CD8-positive, alpha-beta T cell (primary cell): ENCODE measurements at regions of chr10 and their contacts with region 1.

Region 1: DNA sequence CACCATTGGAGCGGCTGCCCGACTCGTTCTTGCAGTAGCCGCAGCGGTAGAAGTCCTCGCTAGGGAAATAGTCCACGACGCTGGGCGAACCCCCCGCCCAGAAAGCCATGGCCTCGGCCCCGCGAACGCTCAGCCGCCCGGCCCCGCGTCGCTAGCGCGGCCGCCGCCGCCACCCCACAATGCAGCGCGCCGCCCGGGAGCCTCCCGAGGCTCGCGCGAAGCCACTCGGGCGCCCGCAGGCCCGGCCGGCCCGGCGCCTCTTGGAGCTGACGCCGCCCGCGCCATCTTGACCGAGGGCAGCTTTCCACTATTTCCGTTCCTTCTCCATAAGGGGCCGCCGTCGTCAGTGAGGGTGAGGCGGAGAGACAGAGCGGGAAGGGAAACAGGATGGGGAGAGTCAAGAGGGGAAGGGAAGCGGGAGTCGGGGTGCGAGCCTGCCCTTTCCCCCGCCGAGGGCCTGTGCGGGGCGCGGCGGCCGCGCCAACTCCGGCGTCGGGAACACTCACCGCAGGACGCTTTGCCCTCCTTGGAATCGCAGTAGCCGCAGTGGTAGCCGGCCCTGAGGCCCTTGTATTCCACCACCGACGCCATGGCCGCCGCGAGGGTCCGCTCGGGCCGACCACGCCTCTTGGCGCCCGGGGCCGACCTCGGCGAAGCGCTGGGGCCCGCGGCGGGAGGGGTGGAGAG is at the start of gene ATE1:
- DNase-seq: peak; percentile 68 to 91 (median 81)
- ATAC-seq: peak; percentile 90
- H3K4me3 ChIP-seq: peak within 1 kb of the TSS; percentile 72 to 87
- H3K4me3 Mint-ChIP-seq: peak within 1 kb of the TSS; percentile 91
- H3K27ac ChIP-seq: peak within 1 kb of the TSS; percentile 91 to 94
- H3K27ac Mint-ChIP-seq: peak within 1 kb of the TSS; percentile 97
- H3K4me1 ChIP-seq: peaks cover 14% of the 10 kb centered on the region
- H3K4me1 Mint-ChIP-seq: peaks cover 30% of the 10 kb centered on the region
- H3K27me3 ChIP-seq: no peaks in the 10 kb centered on the region
- H3K27me3 Mint-ChIP-seq: no peaks in the 10 kb centered on the region
- CTCF ChIP-seq: no peak
- total RNA-seq, gene ATE1: 11.6 to 14.6 TPM

Region 2: GRCh38 chr10:121910673-121911420 is 17.1 kb before region 1 on chr10:
- CTCF ChIA-PET with region 1: no interaction called
- POLR2A ChIA-PET with region 1: no interaction called
- intact Hi-C with region 1: no loop called
- DNase-seq: no peak
- ATAC-seq: no peak
- H3K4me3 ChIP-seq: no peak overlapping the region
- H3K4me3 Mint-ChIP-seq: no peak overlapping the region
- H3K27ac ChIP-seq: no peak overlapping the region
- H3K27ac Mint-ChIP-seq: no peak overlapping the region
- H3K4me1 ChIP-seq: no peaks in the 10 kb centered on the region
- H3K4me1 Mint-ChIP-seq: peaks cover 4% of the 10 kb centered on the region
- H3K27me3 ChIP-seq: no peaks in the 10 kb centered on the region
- H3K27me3 Mint-ChIP-seq: no peaks in the 10 kb centered on the region
- CTCF ChIP-seq: no peak

Region 3: GRCh38 chr10:121942749-121943416 is 14.9 kb after region 1 on chr10:
- CTCF ChIA-PET with region 1: no interaction called
- POLR2A ChIA-PET with region 1: no interaction called
- intact Hi-C with region 1: no loop called
- DNase-seq: no peak
- ATAC-seq: no peak
- H3K4me3 ChIP-seq: no peak overlapping the region
- H3K4me3 Mint-ChIP-seq: no peak overlapping the region
- H3K27ac ChIP-seq: no peak overlapping the region
- H3K27ac Mint-ChIP-seq: no peak overlapping the region
- H3K4me1 ChIP-seq: no peaks in the 10 kb centered on the region
- H3K4me1 Mint-ChIP-seq: no peaks in the 10 kb centered on the region
- H3K27me3 ChIP-seq: no peaks in the 10 kb centered on the region
- H3K27me3 Mint-ChIP-seq: peaks cover 14% of the 10 kb centered on the region
- CTCF ChIP-seq: no peak

Region 4: DNA sequence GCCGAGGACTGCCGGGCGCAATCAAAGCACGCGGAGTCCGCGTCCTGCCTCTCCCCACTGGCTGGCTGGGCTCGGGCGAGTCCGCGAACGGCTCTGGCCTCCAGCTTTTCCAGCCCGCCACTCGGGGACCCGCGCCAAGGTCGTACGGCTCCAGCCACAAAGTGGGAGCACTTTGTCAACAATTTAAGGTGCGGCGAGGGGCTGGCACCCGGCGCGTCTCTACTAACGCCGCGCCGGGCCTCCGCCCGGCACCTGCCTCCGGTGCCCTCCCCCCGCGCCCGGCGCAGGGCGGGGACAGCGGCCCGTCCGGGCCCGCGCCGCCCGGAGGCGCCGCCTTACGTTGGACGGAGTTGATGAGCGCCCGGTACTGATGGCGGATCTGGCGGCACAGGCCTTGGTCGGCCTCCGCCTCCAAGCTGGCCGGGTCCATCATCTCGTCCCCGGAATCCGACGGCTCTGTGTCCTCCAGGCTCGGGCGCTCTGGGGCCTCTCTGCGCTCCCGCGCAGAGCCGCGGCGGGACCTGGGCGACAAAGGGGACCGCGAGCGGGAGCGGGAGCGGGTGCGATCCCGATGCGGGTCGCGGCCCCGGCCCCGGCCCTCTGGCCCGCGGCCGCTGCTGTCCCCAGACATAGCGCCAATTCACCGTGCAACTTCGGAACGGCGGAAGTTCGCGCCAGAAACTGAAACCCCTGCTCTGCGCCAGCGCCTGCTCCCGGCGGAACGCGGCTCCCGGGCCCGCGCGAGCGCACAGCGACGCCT is 46.7 kb after region 1 on chr10 and contains the start of gene NSMCE4A:
- CTCF ChIA-PET with region 1: no interaction called
- POLR2A ChIA-PET with region 1: interaction called, 3 read pairs
- intact Hi-C with region 1: loop called (anchors 1 kb)
- DNase-seq: peak; percentile 43 to 84 (median 69)
- ATAC-seq: peak; percentile 84
- H3K4me3 ChIP-seq: peak within 1 kb of the TSS; percentile 64 to 86
- H3K4me3 Mint-ChIP-seq: peak within 1 kb of the TSS; percentile 81
- H3K27ac ChIP-seq: peak within 1 kb of the TSS; percentile 62 to 76
- H3K27ac Mint-ChIP-seq: peak within 1 kb of the TSS; percentile 37
- H3K4me1 ChIP-seq: peaks cover 18% of the 10 kb centered on the region
- H3K4me1 Mint-ChIP-seq: peaks cover 25% of the 10 kb centered on the region
- H3K27me3 ChIP-seq: no peaks in the 10 kb centered on the region
- H3K27me3 Mint-ChIP-seq: no peaks in the 10 kb centered on the region
- CTCF ChIP-seq: peak; percentile 28
- total RNA-seq, gene NSMCE4A: 34.0 to 37.2 TPM

Region 5: GRCh38 chr10:123132576-123133477 is 1204.8 kb after region 1 on chr10:
- CTCF ChIA-PET with region 1: no interaction called
- POLR2A ChIA-PET with region 1: no interaction called
- intact Hi-C with region 1: no loop called
- DNase-seq: peak; percentile 73 to 91 (median 87)
- ATAC-seq: peak; percentile 62
- H3K4me3 ChIP-seq: peak overlapping the region in 1 of 2 experiments; percentile 16
- H3K4me3 Mint-ChIP-seq: peak overlapping the region; percentile 69
- H3K27ac ChIP-seq: no peak overlapping the region
- H3K27ac Mint-ChIP-seq: no peak overlapping the region
- H3K4me1 ChIP-seq: peaks cover 44% of the 10 kb centered on the region
- H3K4me1 Mint-ChIP-seq: peaks cover 33% of the 10 kb centered on the region
- H3K27me3 ChIP-seq: peaks cover 40 to 44% of the 10 kb centered on the region in 2 experiments
- H3K27me3 Mint-ChIP-seq: peaks cover 62% of the 10 kb centered on the region
- CTCF ChIP-seq: peak; percentile 95